Naive thymus-derived CD4-positive, alpha-beta T cell (primary cell): ENCODE measurements at regions of chr9 and their contacts with region 1.

Region 1: DNA sequence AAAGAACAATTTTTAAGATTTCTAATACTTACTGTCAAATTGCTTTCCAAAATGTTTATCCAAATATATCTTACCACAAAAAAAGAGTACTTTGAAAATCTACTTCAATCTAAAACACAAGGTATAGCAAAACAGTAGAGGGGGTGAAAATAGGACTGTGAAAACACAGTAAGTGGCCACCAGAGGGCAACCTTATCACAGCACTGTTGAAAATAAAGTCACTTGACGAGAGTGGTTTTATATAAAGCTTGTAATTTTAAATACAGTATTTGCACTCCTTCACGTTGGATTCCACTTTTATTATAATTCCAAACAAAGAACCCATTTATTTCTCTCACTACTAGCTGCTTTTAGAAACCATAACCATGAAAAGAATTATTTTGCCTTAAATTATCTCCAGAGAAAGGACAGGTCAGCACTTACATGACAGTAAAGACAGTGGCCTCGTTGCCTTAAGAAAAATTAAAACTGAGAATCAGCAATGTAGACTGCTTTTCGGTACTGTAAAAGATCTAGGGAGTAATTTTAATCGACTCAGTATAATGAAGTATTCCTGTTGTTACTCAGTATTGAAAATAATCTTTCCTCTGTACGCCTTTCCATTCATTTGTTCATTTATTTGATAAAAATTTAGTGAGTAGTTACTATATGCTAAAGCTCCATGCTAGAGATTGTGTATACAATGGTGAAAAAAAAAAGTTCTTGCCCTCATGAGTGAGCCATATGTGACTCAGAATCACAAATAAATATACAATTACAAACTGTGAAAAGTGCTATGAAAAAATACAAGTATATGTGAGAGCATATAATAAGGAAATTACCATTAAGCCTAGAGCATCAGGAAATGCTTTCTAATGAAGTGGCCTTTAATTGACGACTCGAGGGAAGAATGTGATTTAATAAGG is 40.0 kb upstream of the CDK5RAP2 start:
- DNase-seq: peak in 8 of 9 donors; percentile 22 to 59 (median 52)
- ATAC-seq: peak; percentile 94
- H3K4me3 ChIP-seq: no peak overlapping the region
- H3K4me3 Mint-ChIP-seq: no peak overlapping the region
- H3K27ac ChIP-seq: no peak overlapping the region
- H3K27ac Mint-ChIP-seq: no peak overlapping the region
- H3K4me1 ChIP-seq: peaks cover 0 to 3% of the 10 kb centered on the region in 2 donors
- H3K4me1 Mint-ChIP-seq: peaks cover 3 to 10% (median 7%) of the 10 kb centered on the region in 7 donors
- H3K27me3 ChIP-seq: no peaks in the 10 kb centered on the region
- H3K27me3 Mint-ChIP-seq: no peaks in the 10 kb centered on the region

Region 2: DNA sequence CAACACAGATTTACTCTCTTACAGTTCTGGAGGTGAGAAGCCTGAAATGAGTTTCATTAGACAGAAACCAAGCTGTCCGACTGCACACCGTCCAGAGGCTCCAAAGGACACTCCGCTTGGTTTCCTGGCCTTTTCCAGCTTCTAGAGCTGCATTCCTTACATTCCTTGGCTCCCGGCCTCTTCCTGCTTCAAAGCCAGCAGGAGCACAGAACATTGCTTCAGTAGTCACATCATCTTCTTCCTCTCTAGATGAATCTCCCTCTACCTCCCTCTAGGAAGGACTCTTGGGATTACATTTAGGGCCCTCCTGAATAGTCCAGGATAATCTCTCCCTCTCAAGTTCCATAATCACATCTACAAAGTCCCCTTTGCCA is 253.4 kb before region 1 on chr9:
- CTCF ChIA-PET with region 1: no interaction called
- POLR2A ChIA-PET with region 1: no interaction called
- intact Hi-C with region 1: no loop called
- DNase-seq: no peak
- ATAC-seq: no peak
- H3K4me3 ChIP-seq: no peak overlapping the region
- H3K4me3 Mint-ChIP-seq: no peak overlapping the region
- H3K27ac ChIP-seq: no peak overlapping the region
- H3K27ac Mint-ChIP-seq: no peak overlapping the region
- H3K4me1 ChIP-seq: no peaks in the 10 kb centered on the region
- H3K4me1 Mint-ChIP-seq: no peaks in the 10 kb centered on the region
- H3K27me3 ChIP-seq: no peaks in the 10 kb centered on the region
- H3K27me3 Mint-ChIP-seq: peaks cover 0 to 4% (median 3%) of the 10 kb centered on the region in 5 donors

Region 3: DNA sequence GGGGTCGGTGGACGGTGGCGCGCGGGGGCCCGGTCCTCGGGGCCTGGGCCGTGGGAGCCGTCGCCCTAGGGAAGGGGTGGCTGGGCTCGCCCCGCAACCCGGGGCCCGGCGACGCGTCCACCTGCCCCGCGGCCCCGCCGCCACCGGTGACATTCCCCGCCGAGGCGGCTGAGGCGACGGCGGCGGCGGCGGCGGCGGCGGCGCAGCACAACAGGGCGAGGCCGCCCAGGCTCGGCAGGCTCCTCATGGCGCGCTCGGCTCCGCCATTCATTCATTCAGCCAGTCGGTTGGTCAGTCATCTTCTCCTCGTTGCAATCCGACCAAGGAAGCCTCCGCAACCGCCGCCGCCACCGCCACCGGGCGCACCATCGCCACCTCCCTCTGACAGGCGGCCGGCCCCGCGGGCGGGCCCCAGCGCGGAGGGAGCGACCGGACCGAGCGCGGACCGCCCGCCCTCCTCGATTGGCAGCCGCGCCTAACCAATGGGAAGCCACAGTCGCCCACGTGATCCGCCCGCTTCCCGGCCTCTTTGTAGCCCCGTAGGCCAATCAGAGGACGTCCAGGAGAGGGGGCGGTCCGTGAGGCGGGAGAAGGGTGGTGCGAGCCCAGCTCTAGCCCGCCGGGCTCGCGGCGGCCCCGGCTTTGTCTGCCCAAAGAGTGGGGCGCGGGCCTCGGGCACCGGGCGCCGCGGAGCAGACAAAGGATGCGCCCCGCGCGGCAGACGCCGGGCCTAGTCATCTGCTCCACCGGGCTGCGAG is 94.3 kb after region 1 on chr9 and contains the start of gene MEGF9:
- CTCF ChIA-PET with region 1: interaction called, 4 read pairs
- POLR2A ChIA-PET with region 1: interaction called, 3 read pairs
- intact Hi-C with region 1: loop called (anchors 1 to 5 kb)
- DNase-seq: peak; percentile 90 to 97 (median 94)
- ATAC-seq: peak; percentile 98
- H3K4me3 ChIP-seq: peak within 1 kb of the TSS; percentile 85
- H3K4me3 Mint-ChIP-seq: peak within 1 kb of the TSS; percentile 82 to 98 (median 87)
- H3K27ac ChIP-seq: peak within 1 kb of the TSS; percentile 79
- H3K27ac Mint-ChIP-seq: peak within 1 kb of the TSS; percentile 31 to 98 (median 87)
- H3K4me1 ChIP-seq: peaks cover 22% of the 10 kb centered on the region in 2 donors
- H3K4me1 Mint-ChIP-seq: peaks cover 18 to 43% (median 36%) of the 10 kb centered on the region in 7 donors
- H3K27me3 ChIP-seq: no peaks in the 10 kb centered on the region
- H3K27me3 Mint-ChIP-seq: no peaks in the 10 kb centered on the region
- total RNA-seq, gene MEGF9: 9.5 to 35.4 (median 11.1) TPM

Region 4: DNA sequence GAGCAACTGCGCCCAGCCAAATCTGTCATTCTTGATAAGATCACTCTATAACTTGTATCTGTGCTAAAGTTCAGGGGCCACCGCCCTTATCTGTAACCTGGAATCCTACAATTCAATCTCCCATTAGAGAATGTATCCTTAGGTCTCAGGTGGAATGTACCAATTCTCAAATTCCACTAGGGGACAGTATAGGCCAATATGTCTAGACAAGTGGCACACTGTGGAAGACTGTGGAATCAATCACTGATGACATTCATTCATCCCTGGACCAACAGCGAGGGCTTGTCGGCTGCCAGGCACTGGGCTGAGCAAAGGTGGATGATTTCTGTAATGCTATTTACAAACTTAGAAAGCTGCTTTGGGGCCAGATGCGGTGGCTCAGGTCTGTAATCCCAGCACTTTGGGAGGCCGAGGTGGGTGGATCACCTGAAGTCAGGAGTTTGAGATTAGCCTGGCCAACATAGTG is 123.0 kb after region 1 on chr9:
- CTCF ChIA-PET with region 1: no interaction called
- POLR2A ChIA-PET with region 1: no interaction called
- intact Hi-C with region 1: loop called in 1 of 2 experiments (anchors 2 kb)
- DNase-seq: peak in 5 of 9 donors; percentile 5 to 30 (median 13)
- ATAC-seq: peak; percentile 78
- H3K4me3 ChIP-seq: no peak overlapping the region
- H3K4me3 Mint-ChIP-seq: no peak overlapping the region
- H3K27ac ChIP-seq: no peak overlapping the region
- H3K27ac Mint-ChIP-seq: no peak overlapping the region
- H3K4me1 ChIP-seq: no peaks in the 10 kb centered on the region
- H3K4me1 Mint-ChIP-seq: peaks cover 0 to 4% (median 0%) of the 10 kb centered on the region in 7 donors
- H3K27me3 ChIP-seq: no peaks in the 10 kb centered on the region
- H3K27me3 Mint-ChIP-seq: no peaks in the 10 kb centered on the region

Region 5: DNA sequence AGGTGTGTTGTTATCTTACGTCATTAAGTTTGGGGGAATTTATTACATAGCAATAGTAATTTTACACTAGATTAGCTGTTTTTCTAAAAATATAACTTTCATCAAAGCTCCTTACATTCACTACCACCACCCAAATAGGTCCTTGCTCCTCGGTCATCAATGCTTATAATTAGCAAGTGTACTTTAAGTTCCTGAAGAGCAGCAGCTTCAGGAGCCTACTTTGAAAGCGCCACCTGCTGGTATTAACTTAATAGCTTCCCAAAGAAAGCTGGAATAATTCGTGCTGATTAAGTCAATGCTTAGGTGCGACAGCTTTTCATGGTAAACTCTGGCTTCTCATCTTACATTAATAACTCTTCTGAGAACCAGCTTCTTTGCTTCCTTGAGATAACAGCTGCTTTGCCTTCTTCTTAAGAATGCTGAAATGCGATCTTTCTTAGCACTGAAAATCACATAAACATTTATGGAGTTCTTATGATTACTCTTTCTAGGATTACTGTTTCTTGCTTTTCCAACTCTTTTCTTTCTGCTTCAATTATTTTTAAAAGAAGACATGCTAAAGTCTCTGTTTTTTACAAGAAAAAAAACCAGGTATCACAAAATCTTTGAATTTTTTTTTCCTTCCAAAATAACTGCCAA is 440.1 kb after region 1 on chr9:
- CTCF ChIA-PET with region 1: interaction called, 3 read pairs
- POLR2A ChIA-PET with region 1: no interaction called
- intact Hi-C with region 1: loop called in 1 of 2 experiments (anchors 1 kb)
- DNase-seq: peak in 7 of 9 donors; percentile 16 to 59 (median 53)
- ATAC-seq: peak; percentile 67
- H3K4me3 ChIP-seq: no peak overlapping the region
- H3K4me3 Mint-ChIP-seq: no peak overlapping the region
- H3K27ac ChIP-seq: no peak overlapping the region
- H3K27ac Mint-ChIP-seq: no peak overlapping the region
- H3K4me1 ChIP-seq: peaks cover 0 to 5% of the 10 kb centered on the region in 2 donors
- H3K4me1 Mint-ChIP-seq: peaks cover 10 to 27% (median 15%) of the 10 kb centered on the region in 7 donors
- H3K27me3 ChIP-seq: no peaks in the 10 kb centered on the region
- H3K27me3 Mint-ChIP-seq: peaks cover 0 to 5% (median 0%) of the 10 kb centered on the region in 5 donors